Endothelial cell of umbilical vein (primary cell): ENCODE measurements at regions of chr1 and their contacts with region 1.

Region 1: DNA sequence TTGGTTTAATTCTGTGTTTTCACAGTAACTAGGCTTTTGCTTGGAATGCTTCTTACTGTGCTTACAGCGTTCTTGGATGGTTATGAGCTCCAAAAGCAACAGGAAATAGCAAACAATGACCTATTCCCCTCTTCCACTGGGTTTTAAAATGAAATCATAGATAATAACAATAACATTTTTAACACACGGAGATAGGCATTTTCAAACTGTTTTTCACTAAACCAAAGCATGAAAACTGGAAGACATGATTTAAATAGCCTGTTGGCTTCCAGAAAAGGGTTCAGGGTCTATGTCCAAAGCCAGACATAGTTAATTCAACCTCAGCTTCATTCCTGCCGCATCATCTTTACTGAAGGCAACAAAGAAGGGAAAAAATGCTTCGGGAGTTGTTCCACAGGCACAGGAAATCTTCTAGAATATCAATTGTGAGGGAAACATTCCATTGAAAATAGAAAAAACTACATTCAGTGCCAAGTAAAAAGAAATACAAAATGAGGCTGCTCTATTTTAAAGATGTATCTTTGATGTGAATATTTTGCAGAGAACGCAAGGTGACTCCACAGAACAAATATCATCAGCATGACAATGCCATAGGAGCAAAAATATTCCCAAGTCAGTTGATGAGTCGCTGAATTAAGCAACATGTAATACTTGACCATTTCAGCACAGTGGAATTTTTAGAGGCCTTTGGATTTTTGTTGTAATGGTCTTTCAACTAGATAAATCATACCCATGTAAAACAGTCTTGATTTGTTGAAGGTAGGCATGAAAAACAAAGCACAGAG is 80.7 kb downstream of the NID1 start:
- DNase-seq: peak; percentile 92
- H3K4me3 ChIP-seq: peak overlapping the region in 1 of 3 experiments; percentile 29
- H3K27ac ChIP-seq: peak overlapping the region; percentile 96
- H3K4me1 ChIP-seq: peaks cover 47% of the 10 kb centered on the region
- H3K27me3 ChIP-seq: no peaks in the 10 kb centered on the region
- CTCF ChIP-seq: no peak
- POLR2A ChIP-seq: no peak

Region 2: DNA sequence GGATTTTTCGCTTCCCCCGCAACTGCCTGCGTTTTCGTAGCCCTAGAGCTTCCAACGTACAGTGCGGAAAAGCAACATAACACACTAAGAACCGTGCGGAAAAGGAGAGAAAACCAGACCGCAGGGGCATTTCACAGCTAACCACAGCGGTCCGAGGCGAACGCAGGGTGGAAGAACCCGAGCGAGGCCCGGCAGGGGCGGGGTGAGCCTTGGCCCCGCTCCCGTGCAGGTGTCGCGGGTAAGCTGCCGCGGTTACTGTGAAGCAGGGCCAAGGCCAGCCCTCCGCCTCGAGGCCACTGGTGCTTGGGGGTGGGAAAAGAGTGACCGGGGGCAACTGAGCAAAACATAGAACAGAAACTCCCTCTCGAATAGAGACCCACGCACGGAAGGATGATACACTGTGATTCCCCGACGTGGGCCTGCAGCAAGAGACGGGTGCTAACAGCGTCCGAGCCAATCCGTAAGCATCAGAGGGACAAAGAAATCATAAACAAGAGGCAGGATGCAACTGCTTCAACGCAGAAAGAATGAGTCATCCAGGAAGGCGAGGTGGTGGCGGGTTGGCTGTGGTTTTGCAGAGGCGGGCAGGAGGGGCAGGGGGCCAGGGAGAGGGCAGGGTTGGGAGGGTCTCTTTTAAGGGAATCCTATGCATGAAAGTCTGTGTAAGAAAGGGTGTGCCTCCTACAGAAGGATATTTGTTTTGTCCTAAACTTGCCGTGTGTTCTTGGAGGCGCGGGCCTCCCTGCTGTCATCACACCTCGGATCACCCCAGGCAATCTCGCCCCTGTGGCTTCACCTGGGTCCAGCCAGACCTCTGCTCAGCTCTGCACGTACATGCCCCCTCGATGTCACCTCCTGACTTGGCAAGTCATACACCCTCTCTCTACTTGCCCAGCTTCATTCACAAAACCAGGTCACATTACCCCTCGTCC is 342.0 kb before region 1 on chr1:
- CTCF ChIA-PET with region 1: no interaction called
- POLR2A ChIA-PET with region 1: no interaction called
- dilution Hi-C with region 1: no loop called
- intact Hi-C with region 1: loop called (anchors 1 kb)
- DNase-seq: peak; percentile 62
- H3K4me3 ChIP-seq: no peak overlapping the region
- H3K27ac ChIP-seq: no peak overlapping the region
- H3K4me1 ChIP-seq: peaks cover 7% of the 10 kb centered on the region
- H3K27me3 ChIP-seq: peaks cover 2% of the 10 kb centered on the region in 2 experiments
- CTCF ChIP-seq: no peak
- POLR2A ChIP-seq: no peak

Region 3: GRCh38 chr1:235999259-235999925 is 15.2 kb after region 1 on chr1:
- CTCF ChIA-PET with region 1: interaction called, 6 read pairs
- POLR2A ChIA-PET with region 1: interaction called, 10 read pairs
- dilution Hi-C with region 1: no loop called
- intact Hi-C with region 1: loop called (anchors 1 kb)
- DNase-seq: peak; percentile 95
- H3K4me3 ChIP-seq: no peak overlapping the region
- H3K27ac ChIP-seq: peak overlapping the region; percentile 89
- H3K4me1 ChIP-seq: peaks cover 38% of the 10 kb centered on the region
- H3K27me3 ChIP-seq: no peaks in the 10 kb centered on the region
- CTCF ChIP-seq: no peak
- POLR2A ChIP-seq: peak; percentile 40

Region 4: DNA sequence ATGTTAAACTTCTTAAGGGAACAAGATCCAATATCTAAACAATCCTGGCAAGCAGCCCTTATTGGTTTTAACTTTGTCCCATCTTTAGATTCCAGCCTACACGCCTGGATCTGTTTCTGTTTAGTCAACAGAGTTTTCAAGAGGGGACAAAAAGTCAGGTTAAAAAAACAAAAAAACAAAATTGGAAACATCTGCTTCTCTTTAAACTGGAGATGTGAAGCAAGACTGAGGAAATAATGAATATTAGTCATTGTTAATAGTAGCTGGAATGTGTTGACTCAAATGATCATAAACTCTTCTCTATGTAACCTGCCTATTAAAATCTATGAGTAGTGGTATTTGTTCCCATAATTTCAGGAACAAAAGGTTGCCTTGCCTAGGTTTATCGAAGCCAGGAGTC is 25.6 kb after region 1 on chr1:
- CTCF ChIA-PET with region 1: no interaction called
- POLR2A ChIA-PET with region 1: no interaction called
- dilution Hi-C with region 1: no loop called
- intact Hi-C with region 1: loop called (anchors 1 kb)
- DNase-seq: peak; percentile 87
- H3K4me3 ChIP-seq: no peak overlapping the region
- H3K27ac ChIP-seq: peak overlapping the region; percentile 70
- H3K4me1 ChIP-seq: peaks cover 18% of the 10 kb centered on the region
- H3K27me3 ChIP-seq: no peaks in the 10 kb centered on the region
- CTCF ChIP-seq: no peak
- POLR2A ChIP-seq: no peak

Region 5: DNA sequence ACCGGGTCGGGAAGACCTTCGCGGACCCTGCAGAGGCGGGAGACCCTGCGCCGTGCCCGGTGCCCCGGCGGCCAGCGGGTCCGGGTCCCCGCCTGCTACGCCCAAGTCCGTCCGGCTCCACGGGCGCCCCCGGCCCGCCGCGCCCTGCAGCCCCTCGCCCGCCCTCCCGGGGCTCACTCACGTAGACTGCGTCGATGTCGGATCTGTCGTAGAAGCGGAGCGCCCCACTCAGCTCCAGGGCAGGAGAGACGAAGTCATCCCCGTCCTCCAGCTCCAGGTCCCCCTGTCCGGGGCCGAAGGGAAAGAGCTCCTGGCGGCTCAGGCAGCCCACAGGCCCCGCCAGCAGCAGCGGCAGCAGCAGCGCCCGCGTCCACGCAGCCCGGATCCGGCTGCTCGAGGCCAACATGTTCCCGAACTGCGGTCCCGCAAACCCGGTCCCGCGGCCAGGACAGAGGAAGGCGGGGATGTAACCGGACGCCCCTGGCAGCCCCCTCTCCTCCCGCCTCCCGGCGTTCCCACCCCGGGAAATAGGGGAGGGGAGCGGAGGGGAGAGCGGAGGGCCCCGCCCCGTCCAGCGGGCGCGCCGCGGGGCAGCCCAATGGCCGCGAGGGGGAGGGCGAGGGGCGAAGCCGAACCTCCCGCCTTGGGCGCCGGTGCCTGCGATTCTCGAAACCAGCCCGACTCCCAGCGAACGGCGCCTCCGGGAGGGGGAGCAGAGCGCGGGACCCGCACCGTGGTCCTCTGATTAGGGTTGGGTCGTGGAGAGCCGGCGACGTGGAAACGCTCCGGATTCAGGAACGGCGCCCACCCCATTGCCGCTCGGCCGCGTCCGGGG is 80.7 kb after region 1 on chr1 and contains the start of gene NID1:
- CTCF ChIA-PET with region 1: no interaction called
- POLR2A ChIA-PET with region 1: no interaction called
- dilution Hi-C with region 1: no loop called
- intact Hi-C with region 1: loop called (anchors 1 kb)
- DNase-seq: peak; percentile 75
- H3K4me3 ChIP-seq: peak within 1 kb of the TSS; percentile 75 to 89 (median 89)
- H3K27ac ChIP-seq: peak within 1 kb of the TSS; percentile 55
- H3K4me1 ChIP-seq: peaks cover 8% of the 10 kb centered on the region
- H3K27me3 ChIP-seq: no peaks in the 10 kb centered on the region
- CTCF ChIP-seq: peak in 1 of 2 donors; percentile 52
- POLR2A ChIP-seq: peak; percentile 27
- total RNA-seq, gene NID1: 87.0 and 102 TPM in 2 replicates